ENCODE measurements at regions of chr4 and their contacts with region 1.

Region 1: GRCh38 chr4:180028682-180029081 is 2214.5 kb upstream of the TENM3 start:
- DNase-seq: peak; percentile 58
- ATAC-seq: peak; percentile 92
- H3K4me3 ChIP-seq: no peak overlapping the region
- H3K27ac ChIP-seq: no peak overlapping the region
- H3K4me1 ChIP-seq: no peaks in the 10 kb centered on the region
- H3K27me3 ChIP-seq: no peaks in the 10 kb centered on the region
- CTCF ChIP-seq: peak; percentile 49
- EP300 ChIP-seq: no peak
- POLR2A ChIP-seq: no peak
- RAD21 ChIP-seq: no peak

Region 2: GRCh38 chr4:178577933-178578332 is 1450.7 kb before region 1 on chr4:
- CTCF ChIA-PET with region 1: no interaction called
- POLR2A ChIA-PET with region 1: no interaction called
- in situ Hi-C with region 1: no loop called
- intact Hi-C with region 1: loop called (anchors 5 kb)
- DNase-seq: peak; percentile 1
- ATAC-seq: no peak
- H3K4me3 ChIP-seq: no peak overlapping the region
- H3K27ac ChIP-seq: no peak overlapping the region
- H3K4me1 ChIP-seq: no peaks in the 10 kb centered on the region
- H3K27me3 ChIP-seq: no peaks in the 10 kb centered on the region; a peak in 1 of 5 replicates
- CTCF ChIP-seq: 0 out of 2 replicates have a peak, but pooled peaks have one; percentile 7
- EP300 ChIP-seq: no peak
- POLR2A ChIP-seq: no peak
- RAD21 ChIP-seq: no peak

Region 3: DNA sequence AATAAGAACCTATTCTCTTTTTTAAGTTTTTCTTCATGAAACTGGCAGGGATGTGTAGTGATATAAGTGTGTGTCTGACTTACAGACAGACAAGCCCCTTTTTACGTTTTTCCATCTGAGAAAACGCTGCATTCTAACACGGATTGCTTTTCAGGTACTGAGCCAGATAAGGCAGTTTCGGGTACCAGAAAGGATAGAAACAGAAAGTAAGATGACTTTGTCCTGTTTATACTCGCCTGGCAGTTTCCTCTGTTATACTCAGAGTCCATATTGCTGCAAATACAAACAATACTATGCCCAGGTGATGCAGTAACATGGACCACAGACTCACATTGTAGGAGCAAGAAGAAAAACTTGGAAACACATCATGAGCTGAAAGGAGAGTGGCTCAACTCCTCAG is 265.8 kb before region 1 on chr4:
- CTCF ChIA-PET with region 1: no interaction called
- POLR2A ChIA-PET with region 1: no interaction called
- in situ Hi-C with region 1: no loop called
- intact Hi-C with region 1: no loop called
- DNase-seq: no peak
- ATAC-seq: no peak
- H3K4me3 ChIP-seq: no peak overlapping the region
- H3K27ac ChIP-seq: no peak overlapping the region
- H3K4me1 ChIP-seq: no peaks in the 10 kb centered on the region
- H3K27me3 ChIP-seq: no peaks in the 10 kb centered on the region
- CTCF ChIP-seq: no peak
- EP300 ChIP-seq: no peak
- POLR2A ChIP-seq: no peak
- RAD21 ChIP-seq: no peak

Region 4: DNA sequence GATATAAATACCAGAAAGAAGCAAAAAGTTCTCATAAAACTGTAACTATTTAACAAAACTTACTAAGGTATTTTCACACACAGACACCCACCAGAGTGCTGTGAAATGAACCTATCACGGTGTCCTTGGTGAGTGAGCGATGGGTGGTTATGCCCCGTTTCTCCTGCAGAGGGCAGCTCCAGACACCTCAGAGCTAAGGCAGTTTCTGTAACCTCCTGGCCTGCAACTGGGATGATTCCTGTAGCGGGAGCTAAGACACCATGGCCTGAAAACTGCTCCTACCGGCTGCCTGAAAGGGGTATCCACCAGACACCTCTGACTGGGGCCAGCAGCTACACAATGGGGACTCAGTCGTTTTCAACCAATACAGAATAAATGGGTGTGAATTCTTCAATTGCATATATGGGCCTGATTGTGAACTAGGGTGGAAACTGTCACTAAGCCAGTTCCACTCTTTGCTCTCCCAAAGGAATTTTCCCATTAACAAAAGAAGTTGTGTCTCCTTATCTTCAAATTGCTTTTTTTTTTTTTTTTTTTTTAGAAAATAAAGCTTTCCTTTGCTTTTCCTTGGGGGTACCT is 161.3 kb before region 1 on chr4:
- CTCF ChIA-PET with region 1: no interaction called
- POLR2A ChIA-PET with region 1: no interaction called
- in situ Hi-C with region 1: no loop called
- intact Hi-C with region 1: loop called (anchors 1 kb)
- DNase-seq: peak; percentile 66
- ATAC-seq: peak; percentile 100
- H3K4me3 ChIP-seq: no peak overlapping the region
- H3K27ac ChIP-seq: no peak overlapping the region
- H3K4me1 ChIP-seq: no peaks in the 10 kb centered on the region
- H3K27me3 ChIP-seq: no peaks in the 10 kb centered on the region
- CTCF ChIP-seq: peak; percentile 83
- EP300 ChIP-seq: no peak
- POLR2A ChIP-seq: no peak
- RAD21 ChIP-seq: no peak

Region 5: GRCh38 chr4:180041576-180041975 is 12.9 kb after region 1 on chr4:
- CTCF ChIA-PET with region 1: no interaction called
- POLR2A ChIA-PET with region 1: no interaction called
- in situ Hi-C with region 1: no loop called
- intact Hi-C with region 1: no loop called
- DNase-seq: peak; percentile 41
- ATAC-seq: peak; percentile 89
- H3K4me3 ChIP-seq: no peak overlapping the region
- H3K27ac ChIP-seq: no peak overlapping the region
- H3K4me1 ChIP-seq: no peaks in the 10 kb centered on the region
- H3K27me3 ChIP-seq: no peaks in the 10 kb centered on the region
- CTCF ChIP-seq: no peak
- EP300 ChIP-seq: peak in 1 of 2 experiments; percentile 10; a peak in 1 of 4 replicates
- POLR2A ChIP-seq: no peak
- RAD21 ChIP-seq: no peak

Region 6: DNA sequence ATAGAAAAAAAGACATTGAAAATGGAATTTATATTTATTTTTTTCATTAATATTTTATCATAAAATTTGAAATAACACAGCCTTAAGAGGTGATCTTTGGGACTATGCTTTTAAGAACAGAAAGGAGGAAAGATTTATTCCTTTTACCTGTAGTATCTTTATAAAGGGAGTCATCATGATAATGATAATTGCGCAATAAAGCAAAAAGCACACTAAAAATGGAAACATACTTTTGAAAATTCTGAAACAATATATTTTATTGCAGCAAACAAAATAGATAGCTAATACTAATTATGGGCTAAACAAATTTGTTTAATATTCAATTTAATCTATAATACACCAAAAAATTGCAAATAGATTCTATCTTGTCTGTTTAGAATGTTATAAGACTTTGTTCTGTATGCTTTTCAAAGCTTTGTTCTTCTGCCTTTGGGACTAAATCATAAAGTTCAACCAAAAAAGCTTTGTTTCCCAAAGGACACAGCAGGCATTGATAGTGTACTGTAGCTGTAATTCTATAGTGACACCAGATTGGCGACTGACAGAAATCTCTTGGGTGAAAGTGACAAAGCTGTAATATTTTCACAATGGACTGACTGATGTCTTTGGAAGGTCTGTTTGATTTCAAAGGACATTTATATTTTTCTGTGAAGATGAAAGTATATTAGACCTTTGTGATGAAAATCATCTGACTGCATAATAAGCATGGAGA is 58.0 kb after region 1 on chr4:
- CTCF ChIA-PET with region 1: no interaction called
- POLR2A ChIA-PET with region 1: no interaction called
- in situ Hi-C with region 1: no loop called
- intact Hi-C with region 1: no loop called
- DNase-seq: no peak
- ATAC-seq: no peak
- H3K4me3 ChIP-seq: no peak overlapping the region
- H3K27ac ChIP-seq: no peak overlapping the region
- H3K4me1 ChIP-seq: no peaks in the 10 kb centered on the region
- H3K27me3 ChIP-seq: no peaks in the 10 kb centered on the region
- CTCF ChIP-seq: no peak
- EP300 ChIP-seq: no peak
- POLR2A ChIP-seq: no peak
- RAD21 ChIP-seq: no peak

Measured in HepG2 (cell line).